ENCODE measurements at regions of chr2 and their contacts with region 1.

Region 1: GRCh38 chr2:239586651-239587310 is 186.0 kb upstream of the HDAC4 start:
- DNase-seq: no peak
- ATAC-seq: no peak
- H3K4me3 ChIP-seq: no peak overlapping the region
- H3K4me3 Mint-ChIP-seq: no peak overlapping the region
- H3K27ac ChIP-seq: no peak overlapping the region
- H3K27ac Mint-ChIP-seq: no peak overlapping the region
- H3K4me1 ChIP-seq: no peaks in the 10 kb centered on the region
- H3K4me1 Mint-ChIP-seq: no peaks in the 10 kb centered on the region
- H3K27me3 ChIP-seq: no peaks in the 10 kb centered on the region
- H3K27me3 Mint-ChIP-seq: peaks cover 2% of the 10 kb centered on the region
- CTCF ChIP-seq: no peak

Region 2: GRCh38 chr2:239675826-239676715 is 89.3 kb after region 1 on chr2:
- CTCF ChIA-PET with region 1: no interaction called
- POLR2A ChIA-PET with region 1: no interaction called
- intact Hi-C with region 1: no loop called
- DNase-seq: peak in 1 of 9 experiments; percentile 31
- ATAC-seq: no peak
- H3K4me3 ChIP-seq: no peak overlapping the region
- H3K4me3 Mint-ChIP-seq: no peak overlapping the region
- H3K27ac ChIP-seq: no peak overlapping the region
- H3K27ac Mint-ChIP-seq: no peak overlapping the region
- H3K4me1 ChIP-seq: no peaks in the 10 kb centered on the region
- H3K4me1 Mint-ChIP-seq: no peaks in the 10 kb centered on the region
- H3K27me3 ChIP-seq: no peaks in the 10 kb centered on the region
- H3K27me3 Mint-ChIP-seq: peaks cover 2% of the 10 kb centered on the region
- CTCF ChIP-seq: no peak

Region 3: DNA sequence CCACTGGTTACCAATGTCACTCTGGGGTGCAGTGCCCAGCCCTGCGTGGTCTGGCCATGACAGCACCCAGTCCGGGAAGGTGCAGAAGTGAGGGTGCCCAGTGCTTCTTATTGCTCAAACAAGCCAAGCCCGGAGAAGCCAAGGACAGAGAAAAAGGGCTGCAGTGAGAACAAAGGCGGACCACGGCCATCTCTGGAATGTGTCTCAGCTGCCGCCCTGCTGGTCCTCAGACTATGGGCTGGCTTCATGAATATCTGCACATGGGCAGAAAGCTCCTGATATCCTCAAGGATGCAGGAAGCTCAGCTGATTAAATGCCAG is 520.7 kb after region 1 on chr2:
- CTCF ChIA-PET with region 1: no interaction called
- POLR2A ChIA-PET with region 1: no interaction called
- intact Hi-C with region 1: loop called in 1 of 2 experiments (anchors 10 kb)
- DNase-seq: no peak
- ATAC-seq: no peak
- H3K4me3 ChIP-seq: no peak overlapping the region
- H3K4me3 Mint-ChIP-seq: no peak overlapping the region
- H3K27ac ChIP-seq: no peak overlapping the region
- H3K27ac Mint-ChIP-seq: no peak overlapping the region
- H3K4me1 ChIP-seq: no peaks in the 10 kb centered on the region
- H3K4me1 Mint-ChIP-seq: no peaks in the 10 kb centered on the region
- H3K27me3 ChIP-seq: no peaks in the 10 kb centered on the region
- H3K27me3 Mint-ChIP-seq: peaks cover 32% of the 10 kb centered on the region
- CTCF ChIP-seq: no peak